ENCODE measurements at regions of chr2 and their contacts with region 1.

Region 1: DNA sequence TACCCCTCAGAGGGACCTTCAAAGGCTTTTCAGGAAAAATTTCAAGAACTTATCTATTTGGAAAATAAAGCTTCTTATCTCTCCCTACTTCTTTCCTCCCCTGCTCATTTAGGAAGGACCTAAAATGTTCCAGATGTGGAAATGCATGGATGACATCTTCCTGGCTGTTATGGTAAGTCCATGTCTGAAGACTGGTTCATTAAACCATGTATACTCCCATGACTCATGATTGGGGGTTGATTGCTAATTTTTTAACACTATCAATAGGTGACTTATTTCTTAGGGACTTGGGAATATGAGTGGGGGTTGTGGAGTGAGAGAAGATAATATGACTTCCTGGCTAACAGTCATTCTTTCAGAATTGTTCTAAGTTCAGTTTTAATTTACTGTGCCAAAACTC is 104.0 kb upstream of the PARD3B start:
- DNase-seq: no peak
- H3K4me3 ChIP-seq: no peak overlapping the region
- H3K27ac ChIP-seq: no peak overlapping the region
- H3K4me1 ChIP-seq: no peaks in the 10 kb centered on the region
- H3K27me3 ChIP-seq: no peaks in the 10 kb centered on the region
- CTCF ChIP-seq: no peak
- POLR2A ChIP-seq: no peak

Region 2: GRCh38 chr2:205556841-205557539 is 1115.7 kb after region 1 on chr2:
- intact Hi-C with region 1: loop called (anchors 5 kb)
- DNase-seq: no peak
- H3K4me3 ChIP-seq: no peak overlapping the region
- H3K27ac ChIP-seq: no peak overlapping the region
- H3K4me1 ChIP-seq: no peaks in the 10 kb centered on the region
- H3K27me3 ChIP-seq: no peaks in the 10 kb centered on the region
- CTCF ChIP-seq: no peak
- POLR2A ChIP-seq: no peak

Measured in breast epithelium (tissue), 4 donors.